ENCODE measurements at regions of chr20 and their contacts with region 1.

Region 1: DNA sequence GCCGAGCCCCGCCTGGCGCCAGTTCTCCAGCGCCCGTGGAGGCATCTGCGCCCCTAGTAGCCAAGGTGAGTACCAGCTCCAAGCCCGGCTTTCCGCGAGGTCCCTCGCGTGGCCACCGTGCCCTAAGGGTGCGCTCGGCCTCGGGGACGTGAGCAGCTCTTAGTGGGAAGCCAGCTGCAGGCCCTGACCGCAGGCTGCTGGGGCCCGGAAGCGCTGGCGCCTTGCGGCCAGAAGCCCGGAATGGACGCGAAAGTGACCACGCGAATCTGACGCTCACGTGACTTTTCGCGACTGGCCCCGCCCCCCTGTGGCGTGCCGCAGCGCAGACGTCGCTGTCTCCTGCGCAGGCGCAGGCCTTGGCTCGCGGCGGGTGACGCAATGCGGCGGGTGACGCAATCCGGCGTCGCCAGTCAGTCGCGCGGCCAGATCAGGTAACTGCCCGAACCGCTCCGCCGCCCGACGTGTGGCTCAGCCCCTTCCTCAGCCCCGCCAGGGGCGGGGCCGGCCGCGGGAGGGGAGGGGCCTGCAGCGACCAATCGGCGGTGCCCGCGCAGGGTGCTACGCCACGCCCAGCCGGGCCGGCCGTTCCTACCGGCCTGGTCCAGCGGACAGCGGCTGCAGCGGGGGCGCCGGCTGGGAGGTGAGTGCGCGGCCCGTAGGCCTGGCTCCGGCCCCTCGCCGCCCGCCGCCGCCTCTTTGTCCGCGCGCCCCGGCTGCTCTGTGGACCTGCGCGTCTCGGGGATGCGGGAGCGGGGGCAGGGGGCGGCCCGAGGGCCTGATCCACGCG is at the start of gene GZF1:
- DNase-seq: peak; percentile 99
- H3K4me3 ChIP-seq: peak within 1 kb of the TSS; percentile 79 to 85 (median 83)
- H3K27ac ChIP-seq: peak within 1 kb of the TSS; percentile 96 to 100 (median 99)
- H3K4me1 ChIP-seq: peaks cover 48 to 67% (median 60%) of the 10 kb centered on the region in 4 donors
- H3K27me3 ChIP-seq: no peaks in the 10 kb centered on the region
- CTCF ChIP-seq: peak; percentile 7 to 11 (median 10)
- EP300 ChIP-seq: peak; percentile 75
- POLR2A ChIP-seq: peak; percentile 96
- total RNA-seq, gene GZF1: 10.4 to 22.8 (median 21.0) TPM

Region 2: DNA sequence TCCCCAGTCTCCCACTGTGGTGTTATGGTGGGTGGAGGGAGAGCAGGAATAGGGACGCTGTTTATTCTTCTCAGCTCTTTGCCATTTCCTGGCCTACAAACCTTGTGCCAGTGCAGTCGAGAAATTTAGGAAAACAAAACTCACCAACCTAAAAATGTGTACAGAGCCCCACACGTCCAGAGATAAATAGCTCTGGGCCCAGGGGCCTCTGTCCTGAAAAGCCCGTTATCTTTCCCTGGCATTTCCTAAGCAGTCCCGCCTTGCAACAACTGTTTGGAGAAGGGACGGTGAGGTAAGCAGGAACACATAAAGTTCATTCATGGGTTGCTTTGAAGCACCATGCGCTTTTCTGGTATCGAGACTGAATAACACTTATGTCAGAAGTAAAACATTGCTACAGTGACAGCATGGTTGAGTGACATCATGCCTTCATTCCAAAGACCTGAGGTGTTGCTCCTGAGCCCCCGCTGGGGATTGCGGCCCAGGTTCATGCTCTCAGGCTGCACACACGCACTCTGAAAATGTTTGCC is 91.3 kb before region 1 on chr20:
- intact Hi-C with region 1: no loop called
- DNase-seq: no peak
- H3K4me3 ChIP-seq: no peak overlapping the region
- H3K27ac ChIP-seq: peak overlapping the region; percentile 10 to 63 (median 40)
- H3K4me1 ChIP-seq: peaks cover 0 to 8% (median 3%) of the 10 kb centered on the region in 4 donors
- H3K27me3 ChIP-seq: no peaks in the 10 kb centered on the region
- CTCF ChIP-seq: no peak
- EP300 ChIP-seq: no peak
- POLR2A ChIP-seq: no peak

Region 3: DNA sequence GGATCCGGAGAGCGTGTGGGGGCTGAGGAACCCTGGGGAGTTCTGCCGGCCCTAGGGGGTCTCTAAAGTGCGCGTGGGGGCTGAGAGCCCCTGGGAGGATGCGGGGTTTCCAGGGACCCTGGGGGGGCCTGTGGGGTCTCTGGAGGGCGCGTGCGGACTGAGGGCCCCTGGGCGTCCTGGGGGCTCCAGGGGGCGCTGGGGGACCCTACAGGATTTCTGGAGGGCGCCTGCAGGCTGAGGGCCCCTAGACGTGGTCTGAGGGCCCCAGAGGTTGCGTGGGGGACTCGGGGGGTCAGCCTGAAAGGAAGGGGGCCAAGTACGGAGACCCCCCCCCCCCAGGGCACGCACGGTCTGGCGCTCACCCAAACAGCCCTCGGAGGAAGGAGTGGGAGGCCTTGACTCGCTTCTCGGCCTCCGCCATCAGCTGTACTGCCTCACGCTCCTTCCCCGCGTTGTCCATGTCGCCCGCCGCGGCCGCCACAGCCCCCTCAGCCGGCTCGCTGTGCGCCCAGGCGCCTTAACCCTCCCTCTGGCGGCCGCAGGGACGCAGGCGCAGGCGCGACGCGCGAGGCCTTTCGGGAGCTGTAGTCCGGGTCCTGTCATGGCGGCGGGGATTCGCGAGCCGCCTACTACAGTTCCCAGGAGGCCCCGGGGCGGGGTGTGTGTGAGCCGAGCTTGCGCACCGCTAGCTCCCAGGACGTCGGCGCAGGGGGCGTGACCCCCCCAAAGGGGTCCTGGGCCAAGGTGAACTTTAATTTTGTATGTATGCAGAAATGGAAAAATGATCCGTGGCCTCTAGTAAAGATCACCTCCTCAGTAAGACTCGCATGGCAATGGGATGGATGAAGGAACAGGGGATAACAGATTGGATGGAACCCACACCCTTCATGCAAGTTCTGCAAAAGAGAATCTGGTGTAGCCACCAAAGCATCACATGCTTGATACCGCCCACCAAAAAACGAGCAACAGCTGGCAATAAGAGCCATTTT is 59.4 kb after region 1 on chr20 and contains the start of gene NAPB:
- intact Hi-C with region 1: loop called (anchors 5 kb)
- DNase-seq: peak; percentile 98
- H3K4me3 ChIP-seq: peak within 1 kb of the TSS; percentile 83 to 95 (median 91)
- H3K27ac ChIP-seq: peak within 1 kb of the TSS; percentile 87 to 95 (median 90)
- H3K4me1 ChIP-seq: peaks cover 21 to 39% (median 39%) of the 10 kb centered on the region in 4 donors
- H3K27me3 ChIP-seq: peaks cover 0 to 4% (median 0%) of the 10 kb centered on the region in 4 donors
- CTCF ChIP-seq: peak; percentile 39 to 68 (median 61)
- EP300 ChIP-seq: no peak
- POLR2A ChIP-seq: peak; percentile 66
- total RNA-seq, gene NAPB: 13.7 to 18.7 (median 15.2) TPM

Region 4: DNA sequence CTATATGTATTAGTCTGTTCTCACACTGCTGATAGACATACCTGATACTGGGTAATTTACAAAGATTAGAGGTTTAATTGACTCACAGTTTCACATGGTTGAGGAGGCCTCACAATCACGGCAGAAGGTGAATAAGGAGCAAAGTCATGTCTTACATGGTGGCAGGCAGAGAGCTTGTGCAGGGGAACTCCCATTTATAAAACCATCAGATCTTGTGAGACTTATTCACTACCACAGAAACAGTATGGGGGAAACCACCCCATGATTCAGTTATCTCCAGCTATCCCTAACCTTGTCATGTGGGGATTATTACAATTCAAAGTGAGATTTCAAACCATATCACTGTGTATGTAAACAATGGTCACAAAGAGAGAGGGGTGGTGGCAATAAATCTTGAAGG is 135.7 kb after region 1 on chr20:
- intact Hi-C with region 1: no loop called
- DNase-seq: no peak
- H3K4me3 ChIP-seq: no peak overlapping the region
- H3K27ac ChIP-seq: no peak overlapping the region
- H3K4me1 ChIP-seq: peaks cover 0 to 8% (median 0%) of the 10 kb centered on the region in 4 donors
- H3K27me3 ChIP-seq: peaks cover 0 to 14% (median 0%) of the 10 kb centered on the region in 4 donors
- CTCF ChIP-seq: no peak
- EP300 ChIP-seq: no peak
- POLR2A ChIP-seq: no peak

Region 5: DNA sequence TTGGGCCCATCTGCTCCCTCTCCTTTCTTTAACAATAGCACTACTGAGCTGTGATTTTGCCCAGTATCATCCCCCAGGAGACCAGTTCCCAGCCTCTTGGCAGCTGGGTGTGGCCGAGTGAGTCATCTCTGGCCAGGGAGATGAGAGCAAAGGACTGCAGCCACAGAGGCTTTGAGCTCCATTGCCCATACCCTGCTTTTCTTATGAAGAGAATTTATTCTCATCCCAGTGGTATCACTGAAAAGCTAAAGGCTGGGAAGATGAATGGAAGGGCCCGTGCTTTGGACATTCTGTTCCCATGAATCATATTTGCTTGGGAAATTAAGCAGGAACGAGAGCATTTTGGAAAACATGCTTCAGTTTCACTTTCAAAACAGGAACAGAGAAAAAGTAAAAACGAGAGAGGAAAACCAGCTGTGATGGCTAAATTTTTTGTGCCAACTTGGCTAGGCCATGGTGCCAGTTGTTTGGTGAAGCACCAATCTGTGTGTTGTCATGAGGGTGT is 261.1 kb after region 1 on chr20:
- intact Hi-C with region 1: no loop called
- DNase-seq: peak; percentile 94
- H3K4me3 ChIP-seq: peak overlapping the region; percentile 33 to 46 (median 38)
- H3K27ac ChIP-seq: peak overlapping the region; percentile 81 to 88 (median 88)
- H3K4me1 ChIP-seq: peaks cover 17 to 50% (median 37%) of the 10 kb centered on the region in 4 donors
- H3K27me3 ChIP-seq: no peaks in the 10 kb centered on the region
- CTCF ChIP-seq: no peak
- EP300 ChIP-seq: peak; percentile 97
- POLR2A ChIP-seq: no peak

Region 6: GRCh38 chr20:23634985-23635767 is 273.4 kb after region 1 on chr20:
- intact Hi-C with region 1: loop called (anchors 5 kb)
- DNase-seq: peak; percentile 92
- H3K4me3 ChIP-seq: peak overlapping the region; percentile 80 to 84 (median 82)
- H3K27ac ChIP-seq: peak overlapping the region; percentile 92 to 97 (median 96)
- H3K4me1 ChIP-seq: peaks cover 22 to 67% (median 60%) of the 10 kb centered on the region in 4 donors
- H3K27me3 ChIP-seq: no peaks in the 10 kb centered on the region
- CTCF ChIP-seq: no peak
- EP300 ChIP-seq: peak; percentile 47
- POLR2A ChIP-seq: no peak

Measured in esophagus muscularis mucosa (tissue), 4 donors.